ENCODE measurements at regions of chr2 and their contacts with region 1.

Region 1: GRCh38 chr2:10448208-10448645 is at the start of gene ODC1:
- DNase-seq: peak; percentile 98
- ATAC-seq: peak; percentile 80
- H3K4me3 Mint-ChIP-seq: peak within 1 kb of the TSS; percentile 85
- H3K27ac Mint-ChIP-seq: peak within 1 kb of the TSS; percentile 85
- H3K4me1 Mint-ChIP-seq: peaks cover 44% of the 10 kb centered on the region
- H3K27me3 Mint-ChIP-seq: no peaks in the 10 kb centered on the region
- CTCF ChIP-seq: no peak
- total RNA-seq, gene ODC1: 192 and 200 TPM in 2 replicates

Region 2: GRCh38 chr2:9555297-9556141 is 892.7 kb before region 1 on chr2 and contains the start of gene ADAM17:
- CTCF ChIA-PET with region 1: no interaction called
- POLR2A ChIA-PET with region 1: no interaction called
- intact Hi-C with region 1: loop called (anchors 5 kb)
- DNase-seq: peak; percentile 92
- ATAC-seq: peak; percentile 90
- H3K4me3 Mint-ChIP-seq: peak within 1 kb of the TSS; percentile 96
- H3K27ac Mint-ChIP-seq: peak within 1 kb of the TSS; percentile 98
- H3K4me1 Mint-ChIP-seq: peaks cover 54% of the 10 kb centered on the region
- H3K27me3 Mint-ChIP-seq: no peaks in the 10 kb centered on the region
- CTCF ChIP-seq: no peak
- total RNA-seq, gene ADAM17: 34.3 and 39.5 TPM in 2 replicates

Region 3: DNA sequence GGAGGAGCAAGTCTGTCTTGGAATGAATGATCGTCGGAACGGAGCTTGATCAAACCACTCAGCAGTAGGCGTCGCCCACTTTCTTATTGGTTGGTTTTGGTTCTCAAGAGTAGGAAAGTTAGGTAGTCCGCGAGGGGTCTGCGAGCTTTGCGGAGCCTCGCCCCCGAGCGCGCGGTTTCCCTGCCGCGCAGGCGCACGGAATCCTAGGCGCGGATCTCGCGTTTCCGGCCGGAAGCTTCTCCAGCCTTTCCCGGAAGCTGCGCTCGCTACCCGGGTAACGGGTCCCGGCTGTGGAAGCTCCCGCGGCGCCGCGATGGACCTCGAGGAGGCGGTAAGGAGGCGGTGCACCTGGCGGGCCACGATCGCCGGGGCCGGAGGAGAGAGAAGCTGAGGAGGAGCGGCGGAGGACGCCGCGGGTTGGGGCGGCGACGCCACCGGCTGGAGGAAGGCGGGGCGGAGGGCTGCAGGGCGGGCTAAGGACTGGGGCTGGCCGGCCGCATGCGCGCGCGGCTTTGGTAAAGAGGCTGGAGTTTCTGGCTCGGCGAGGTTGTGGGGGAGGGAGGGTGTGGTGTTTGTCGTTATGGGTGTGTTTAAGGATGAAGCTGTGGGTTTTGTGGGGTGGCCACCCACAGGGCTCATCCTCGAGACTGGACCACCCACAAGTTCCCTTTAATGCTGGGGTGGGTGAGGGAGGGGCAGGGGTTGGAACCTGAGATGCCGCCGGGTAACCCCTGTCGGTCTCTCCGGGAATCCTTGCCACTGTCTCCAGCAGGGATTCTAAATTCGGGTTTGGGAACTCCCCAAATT is 604.8 kb before region 1 on chr2 and contains the start of gene TAF1B:
- CTCF ChIA-PET with region 1: no interaction called
- POLR2A ChIA-PET with region 1: interaction called, 5 read pairs
- intact Hi-C with region 1: loop called (anchors 1 kb)
- DNase-seq: peak; percentile 86
- ATAC-seq: peak; percentile 87
- H3K4me3 Mint-ChIP-seq: peak within 1 kb of the TSS; percentile 94
- H3K27ac Mint-ChIP-seq: peak within 1 kb of the TSS; percentile 91
- H3K4me1 Mint-ChIP-seq: peaks cover 34% of the 10 kb centered on the region
- H3K27me3 Mint-ChIP-seq: no peaks in the 10 kb centered on the region
- CTCF ChIP-seq: no peak
- total RNA-seq, gene TAF1B: 26.4 and 28.7 TPM in 2 replicates

Region 4: DNA sequence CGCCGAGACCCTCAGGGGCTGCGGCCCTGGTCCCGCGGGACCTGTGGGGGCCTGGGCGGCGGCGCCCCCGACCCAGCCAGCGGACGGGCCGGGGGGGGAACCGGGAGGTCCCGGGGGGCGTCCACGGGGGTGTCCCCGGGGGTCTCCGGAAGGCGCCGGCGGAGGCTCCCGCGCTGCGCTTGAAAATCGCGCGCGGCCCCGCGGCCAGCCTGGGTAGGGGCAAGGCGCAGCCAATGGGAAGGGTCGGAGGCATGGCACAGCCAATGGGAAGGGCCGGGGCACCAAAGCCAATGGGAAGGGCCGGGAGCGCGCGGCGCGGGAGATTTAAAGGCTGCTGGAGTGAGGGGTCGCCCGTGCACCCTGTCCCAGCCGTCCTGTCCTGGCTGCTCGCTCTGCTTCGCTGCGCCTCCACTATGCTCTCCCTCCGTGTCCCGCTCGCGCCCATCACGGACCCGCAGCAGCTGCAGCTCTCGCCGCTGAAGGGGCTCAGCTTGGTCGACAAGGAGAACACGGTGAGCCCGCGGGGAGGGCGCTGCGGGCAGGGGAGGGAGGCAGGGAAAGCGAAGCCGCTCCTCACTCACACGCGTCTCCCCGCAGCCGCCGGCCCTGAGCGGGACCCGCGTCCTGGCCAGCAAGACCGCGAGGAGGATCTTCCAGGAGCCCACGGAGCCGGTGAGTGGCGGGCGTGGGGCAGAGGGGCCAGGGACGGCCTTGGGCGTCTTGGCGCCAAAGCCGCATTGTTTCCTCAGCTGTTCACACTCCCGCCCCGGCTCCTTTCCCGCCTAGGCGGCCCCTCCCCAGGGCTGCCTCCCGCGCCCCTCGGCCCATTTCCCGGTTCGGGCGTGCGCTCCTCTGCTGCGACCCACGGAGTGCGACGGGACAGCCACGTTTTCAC is 325.6 kb before region 1 on chr2 and contains the start of gene RRM2:
- CTCF ChIA-PET with region 1: interaction called, 23 read pairs
- POLR2A ChIA-PET with region 1: interaction called, 6 read pairs
- intact Hi-C with region 1: loop called (anchors 1 kb)
- DNase-seq: peak; percentile 77
- ATAC-seq: peak; percentile 82
- H3K4me3 Mint-ChIP-seq: peak within 1 kb of the TSS; percentile 97
- H3K27ac Mint-ChIP-seq: peak within 1 kb of the TSS; percentile 12
- H3K4me1 Mint-ChIP-seq: peaks cover 35% of the 10 kb centered on the region
- H3K27me3 Mint-ChIP-seq: peaks cover 8% of the 10 kb centered on the region
- CTCF ChIP-seq: no peak
- total RNA-seq, gene RRM2: 8.6 and 9.3 TPM in 2 replicates

Region 5: GRCh38 chr2:10408649-10409579 is 39.3 kb before region 1 on chr2:
- CTCF ChIA-PET with region 1: interaction called, 9 read pairs
- POLR2A ChIA-PET with region 1: interaction called, 70 read pairs
- intact Hi-C with region 1: loop called (anchors 1 kb)
- DNase-seq: peak; percentile 70
- ATAC-seq: peak; percentile 77
- H3K4me3 Mint-ChIP-seq: peak overlapping the region; percentile 73
- H3K27ac Mint-ChIP-seq: peak overlapping the region; percentile 92
- H3K4me1 Mint-ChIP-seq: peaks cover 66% of the 10 kb centered on the region
- H3K27me3 Mint-ChIP-seq: no peaks in the 10 kb centered on the region
- CTCF ChIP-seq: peak; percentile 51

Region 6: GRCh38 chr2:10668402-10669012 is 220.3 kb after region 1 on chr2:
- CTCF ChIA-PET with region 1: no interaction called
- POLR2A ChIA-PET with region 1: no interaction called
- intact Hi-C with region 1: loop called (anchors 2 kb)
- DNase-seq: no peak
- ATAC-seq: peak; percentile 58
- H3K4me3 Mint-ChIP-seq: no peak overlapping the region
- H3K27ac Mint-ChIP-seq: no peak overlapping the region
- H3K4me1 Mint-ChIP-seq: no peaks in the 10 kb centered on the region
- H3K27me3 Mint-ChIP-seq: no peaks in the 10 kb centered on the region
- CTCF ChIP-seq: no peak

Region 7: GRCh38 chr2:11154923-11155380 is 706.7 kb after region 1 on chr2:
- CTCF ChIA-PET with region 1: no interaction called
- POLR2A ChIA-PET with region 1: no interaction called
- intact Hi-C with region 1: loop called (anchors 1 kb)
- DNase-seq: peak; percentile 91
- ATAC-seq: peak; percentile 92
- H3K4me3 Mint-ChIP-seq: peak overlapping the region; percentile 85
- H3K27ac Mint-ChIP-seq: peak overlapping the region; percentile 84
- H3K4me1 Mint-ChIP-seq: peaks cover 20% of the 10 kb centered on the region
- H3K27me3 Mint-ChIP-seq: no peaks in the 10 kb centered on the region
- CTCF ChIP-seq: no peak